Vagina (tissue), 2 donors: ENCODE measurements at regions of chr15 and their contacts with region 1.

Region 1: DNA sequence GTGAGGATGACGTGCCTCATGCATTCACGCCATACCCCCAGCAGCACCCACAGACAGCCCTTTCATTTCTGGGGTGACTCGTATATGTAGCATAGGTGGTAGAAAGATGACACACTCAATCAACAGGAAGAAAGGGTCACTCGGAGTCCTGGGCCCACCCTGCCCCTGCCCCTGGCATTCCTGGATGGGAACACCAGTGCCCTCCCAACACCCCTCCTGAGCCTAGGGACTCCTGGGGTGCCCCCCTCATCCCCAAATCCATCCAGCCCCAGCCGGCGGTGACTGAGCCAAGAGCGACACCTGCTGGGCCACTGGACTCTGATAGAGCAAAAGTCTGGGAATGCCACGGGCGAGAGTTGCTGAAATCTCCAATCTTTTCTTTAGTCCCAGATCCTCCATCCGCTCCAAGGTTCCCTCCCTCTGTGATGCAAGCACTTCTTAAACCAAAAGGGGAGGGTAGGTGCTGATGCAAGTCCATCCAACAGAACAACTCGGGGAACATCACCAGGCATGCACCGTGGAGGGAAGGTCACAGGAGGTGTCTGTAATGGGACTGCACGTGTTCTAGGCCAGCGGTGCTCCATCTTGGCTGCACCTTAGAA is 31.1 kb downstream of the ACAN start:
- DNase-seq: no peak
- H3K4me3 ChIP-seq: no peak overlapping the region
- H3K27ac ChIP-seq: no peak overlapping the region
- H3K4me1 ChIP-seq: no peaks in the 10 kb centered on the region
- H3K27me3 ChIP-seq: no peaks in the 10 kb centered on the region
- CTCF ChIP-seq: peak; percentile 7 to 48 (median 38)
- POLR2A ChIP-seq: no peak

Region 2: GRCh38 chr15:88657326-88658069 is 176.8 kb before region 1 on chr15:
- intact Hi-C with region 1: loop called (anchors 5 kb)
- DNase-seq: peak in 1 of 2 donors; percentile 64
- H3K4me3 ChIP-seq: no peak overlapping the region
- H3K27ac ChIP-seq: no peak overlapping the region
- H3K4me1 ChIP-seq: peaks cover 9% of the 10 kb centered on the region
- H3K27me3 ChIP-seq: no peaks in the 10 kb centered on the region
- CTCF ChIP-seq: peak in 1 of 3 experiments; percentile 50
- POLR2A ChIP-seq: no peak

Region 3: GRCh38 chr15:89034288-89034687 is 200.0 kb after region 1 on chr15:
- intact Hi-C with region 1: no loop called
- DNase-seq: no peak
- H3K4me3 ChIP-seq: no peak overlapping the region
- H3K27ac ChIP-seq: no peak overlapping the region
- H3K4me1 ChIP-seq: no peaks in the 10 kb centered on the region
- H3K27me3 ChIP-seq: no peaks in the 10 kb centered on the region
- CTCF ChIP-seq: no peak
- POLR2A ChIP-seq: no peak